ENCODE measurements at regions of chr1 and their contacts with region 1.

Region 1: DNA sequence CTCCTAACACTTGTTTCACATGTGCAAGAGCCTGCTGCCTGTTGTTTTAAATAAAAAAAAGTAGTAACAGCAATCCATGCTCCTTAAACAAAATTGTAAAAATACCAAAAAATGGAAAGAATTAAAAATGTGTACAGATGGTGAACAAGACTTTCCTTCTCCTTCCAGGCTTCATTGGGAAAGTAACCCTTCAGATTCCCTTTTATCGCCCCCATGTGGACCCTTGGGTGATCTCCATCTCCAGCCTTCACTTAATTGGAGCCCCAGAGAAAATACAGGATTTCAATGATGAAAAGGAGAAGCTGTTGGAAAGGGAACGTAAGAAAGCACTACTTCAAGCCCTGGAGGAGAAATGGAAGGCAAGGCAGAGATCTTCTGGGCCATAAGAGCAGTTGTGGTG is 14.2 kb downstream of the VPS13D start:
- DNase-seq: no peak
- CTCF ChIP-seq: peak; percentile 40

Region 2: DNA sequence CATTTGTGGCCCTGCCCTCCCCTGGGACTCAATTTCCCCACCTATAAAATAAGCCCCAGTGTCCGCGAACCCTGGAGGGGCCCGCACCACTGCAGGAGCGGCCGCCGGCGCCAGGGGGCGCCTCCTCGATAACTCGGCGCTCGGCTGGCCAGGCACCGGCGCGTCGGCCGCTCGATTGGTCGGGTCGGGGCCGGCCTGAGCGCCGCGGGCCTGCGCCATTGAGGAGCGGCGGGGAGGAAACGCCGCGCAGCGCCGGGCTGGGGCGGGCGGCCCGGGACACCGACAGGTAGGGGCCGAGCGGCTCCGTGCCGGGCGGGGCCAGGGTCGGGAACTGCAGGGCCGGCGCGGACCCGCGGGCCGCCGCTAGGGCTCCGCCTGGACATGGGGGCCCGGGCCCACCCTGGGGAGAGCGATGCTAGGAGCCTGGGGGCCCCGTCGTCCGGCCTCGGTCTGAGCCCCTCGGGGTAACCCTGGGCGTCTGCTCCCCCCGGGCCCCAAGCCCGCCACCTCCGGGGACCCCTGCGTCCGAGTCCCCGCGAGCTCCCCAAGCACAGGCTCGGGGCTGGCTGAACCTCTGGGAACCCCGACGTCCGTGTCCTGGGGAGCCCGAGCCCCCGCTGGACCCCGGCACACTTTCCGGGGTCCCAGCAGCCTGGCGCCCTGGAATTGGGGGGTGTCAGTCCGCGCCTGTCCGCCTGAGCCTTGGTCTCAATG is 14.1 kb before region 1 on chr1 and contains the start of gene VPS13D:
- CTCF ChIA-PET with region 1: interaction called, 16 read pairs
- POLR2A ChIA-PET with region 1: no interaction called
- DNase-seq: peak; percentile 96
- CTCF ChIP-seq: peak; percentile 94

Measured in GM10248 (cell line).